Mammary epithelial cell (primary cell): ENCODE measurements at regions of chr19 and their contacts with region 1.

Region 1: GRCh38 chr19:11374433-11375142 is at the start of gene SWSAP1:
- DNase-seq: peak; percentile 99
- H3K4me3 ChIP-seq: peak within 1 kb of the TSS; percentile 60 to 74 (median 62)
- H3K27ac ChIP-seq: peak within 1 kb of the TSS; percentile 77
- H3K4me1 ChIP-seq: peaks cover 36% of the 10 kb centered on the region
- H3K27me3 ChIP-seq: no peaks in the 10 kb centered on the region
- CTCF ChIP-seq: no peak
- total RNA-seq, gene SWSAP1: 0.67 to 2.3 TPM

Region 2: GRCh38 chr19:11155373-11156120 is 219.0 kb before region 1 on chr19 and contains the start of gene SPC24:
- CTCF ChIA-PET with region 1: no interaction called
- dilution Hi-C with region 1: no loop called
- in situ Hi-C with region 1: no loop called
- intact Hi-C with region 1: no loop called
- DNase-seq: peak; percentile 97
- H3K4me3 ChIP-seq: peak within 1 kb of the TSS; percentile 58 to 80 (median 76)
- H3K27ac ChIP-seq: peak within 1 kb of the TSS; percentile 48
- H3K4me1 ChIP-seq: peaks cover 25% of the 10 kb centered on the region
- H3K27me3 ChIP-seq: no peaks in the 10 kb centered on the region
- CTCF ChIP-seq: no peak
- total RNA-seq, gene SPC24: 2.2 to 35.4 TPM

Region 3: GRCh38 chr19:11339254-11340098 is 35.1 kb before region 1 on chr19 and contains the start of gene RAB3D:
- CTCF ChIA-PET with region 1: no interaction called
- dilution Hi-C with region 1: no loop called
- in situ Hi-C with region 1: no loop called
- intact Hi-C with region 1: loop called (anchors 5 kb)
- DNase-seq: peak; percentile 75
- H3K4me3 ChIP-seq: peak within 1 kb of the TSS; percentile 65 to 95 (median 72)
- H3K27ac ChIP-seq: no peak within 1 kb of the TSS
- H3K4me1 ChIP-seq: peaks cover 22% of the 10 kb centered on the region
- H3K27me3 ChIP-seq: no peaks in the 10 kb centered on the region
- CTCF ChIP-seq: no peak
- total RNA-seq, gene RAB3D: 27.8 to 50.2 TPM

Region 4: GRCh38 chr19:11346092-11346940 is 28.3 kb before region 1 on chr19 and contains the starts of genes CCDC159 and TMEM205:
- CTCF ChIA-PET with region 1: no interaction called
- dilution Hi-C with region 1: no loop called
- in situ Hi-C with region 1: no loop called
- intact Hi-C with region 1: loop called (anchors 1 kb)
- DNase-seq: peak; percentile 99
- H3K4me3 ChIP-seq: peak within 1 kb of the TSS; percentile 54 to 95 (median 74)
- H3K27ac ChIP-seq: peak within 1 kb of the TSS; percentile 79
- H3K4me1 ChIP-seq: peaks cover 23% of the 10 kb centered on the region
- H3K27me3 ChIP-seq: no peaks in the 10 kb centered on the region
- CTCF ChIP-seq: no peak
- total RNA-seq, gene CCDC159: 4.0 to 10.9 TPM
- total RNA-seq, gene TMEM205: 57.5 to 72.0 TPM